ENCODE measurements at regions of chr15 and their contacts with region 1.

Region 1: DNA sequence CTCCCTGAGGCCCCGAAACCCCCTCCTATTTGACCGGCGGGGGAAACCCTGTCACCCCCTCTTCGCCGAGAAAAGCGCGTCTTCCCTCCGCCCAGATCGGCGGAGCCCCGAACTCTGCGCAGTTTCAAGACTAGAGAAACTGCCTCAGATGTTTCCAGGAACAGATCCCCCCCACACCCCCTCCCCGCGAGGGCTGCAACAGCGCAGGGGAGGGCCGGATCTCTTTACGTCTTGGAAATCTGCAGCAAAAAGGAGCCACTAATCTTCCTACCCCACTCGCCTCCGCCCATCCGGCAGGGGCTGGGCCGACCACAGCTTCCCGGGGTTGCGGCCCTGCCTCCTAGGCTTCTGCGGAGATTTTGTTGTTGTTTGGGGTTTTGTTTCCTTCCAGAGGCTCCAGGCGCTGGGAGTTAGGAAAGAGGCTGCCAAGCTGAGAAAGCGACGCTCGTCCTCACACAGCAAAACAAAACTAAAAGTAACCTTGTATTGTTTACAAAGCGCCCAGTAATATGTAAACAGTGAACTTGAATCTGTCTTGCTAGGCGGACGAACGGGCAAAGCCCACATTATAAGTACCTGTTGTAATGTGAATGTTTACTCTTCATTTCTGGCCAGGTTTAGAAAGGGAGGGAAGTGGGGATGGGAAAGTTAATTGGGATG is 2.2 kb downstream of the FOXB1 start:
- DNase-seq: peak in 8 of 9 experiments; percentile 43 to 71 (median 58)
- ATAC-seq: peak; percentile 69
- H3K4me3 ChIP-seq: peak overlapping the region; percentile 48 to 53
- H3K4me3 Mint-ChIP-seq: peak overlapping the region; percentile 83
- H3K27ac ChIP-seq: no peak overlapping the region
- H3K27ac Mint-ChIP-seq: peak overlapping the region; percentile 71
- H3K4me1 ChIP-seq: peaks cover 36% of the 10 kb centered on the region
- H3K4me1 Mint-ChIP-seq: peaks cover 33% of the 10 kb centered on the region
- H3K27me3 ChIP-seq: peaks cover 62 to 73% of the 10 kb centered on the region in 2 experiments
- H3K27me3 Mint-ChIP-seq: peaks cover 92% of the 10 kb centered on the region
- CTCF ChIP-seq: no peak

Region 2: DNA sequence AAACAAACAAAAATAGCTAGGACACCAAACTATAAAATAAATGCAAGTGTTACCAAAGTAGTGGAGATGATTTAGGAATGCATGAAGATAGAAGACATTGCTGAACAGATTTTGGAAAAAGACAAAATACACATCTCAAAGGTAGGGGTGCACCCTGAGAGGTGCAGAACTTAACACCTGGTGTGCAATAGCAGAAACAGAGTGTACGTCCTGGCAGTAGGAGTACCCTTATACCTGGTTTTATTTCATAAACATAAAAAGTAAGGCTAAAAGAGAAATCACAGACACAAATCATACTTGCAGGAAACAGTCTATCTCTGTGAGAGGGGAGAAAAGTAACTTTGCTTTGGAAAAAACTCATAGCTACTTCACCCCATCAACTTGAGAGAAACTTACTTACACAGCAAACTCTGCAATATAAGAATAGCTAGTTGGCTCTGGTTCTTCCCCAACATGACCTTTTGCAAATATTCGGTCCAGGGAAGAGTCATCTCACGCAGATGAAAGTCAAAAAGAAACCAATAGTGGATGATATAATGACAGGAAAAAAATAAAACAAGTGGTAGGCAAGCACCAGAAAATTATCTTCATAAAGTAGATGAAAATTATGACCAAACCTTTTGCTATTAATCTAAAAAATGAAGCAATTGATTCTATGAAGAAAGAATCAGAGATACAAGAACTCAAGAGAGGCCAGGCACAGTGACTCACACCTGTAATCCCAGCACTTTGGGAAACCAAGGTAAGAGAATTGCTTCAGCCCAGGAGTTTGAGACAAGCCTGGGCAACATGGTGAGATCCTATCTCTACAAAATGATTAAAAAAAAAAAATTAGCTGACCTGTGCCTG is 208.4 kb before region 1 on chr15:
- CTCF ChIA-PET with region 1: no interaction called
- POLR2A ChIA-PET with region 1: no interaction called
- intact Hi-C with region 1: loop called in 1 of 2 experiments (anchors 5 kb)
- DNase-seq: no peak
- ATAC-seq: no peak
- H3K4me3 ChIP-seq: peak overlapping the region in 1 of 2 experiments; percentile 11
- H3K4me3 Mint-ChIP-seq: peak overlapping the region; percentile 49
- H3K27ac ChIP-seq: peak overlapping the region; percentile 21 to 37
- H3K27ac Mint-ChIP-seq: peak overlapping the region; percentile 85
- H3K4me1 ChIP-seq: peaks cover 66% of the 10 kb centered on the region
- H3K4me1 Mint-ChIP-seq: peaks cover 76% of the 10 kb centered on the region
- H3K27me3 ChIP-seq: no peaks in the 10 kb centered on the region
- H3K27me3 Mint-ChIP-seq: no peaks in the 10 kb centered on the region
- CTCF ChIP-seq: no peak

Region 3: DNA sequence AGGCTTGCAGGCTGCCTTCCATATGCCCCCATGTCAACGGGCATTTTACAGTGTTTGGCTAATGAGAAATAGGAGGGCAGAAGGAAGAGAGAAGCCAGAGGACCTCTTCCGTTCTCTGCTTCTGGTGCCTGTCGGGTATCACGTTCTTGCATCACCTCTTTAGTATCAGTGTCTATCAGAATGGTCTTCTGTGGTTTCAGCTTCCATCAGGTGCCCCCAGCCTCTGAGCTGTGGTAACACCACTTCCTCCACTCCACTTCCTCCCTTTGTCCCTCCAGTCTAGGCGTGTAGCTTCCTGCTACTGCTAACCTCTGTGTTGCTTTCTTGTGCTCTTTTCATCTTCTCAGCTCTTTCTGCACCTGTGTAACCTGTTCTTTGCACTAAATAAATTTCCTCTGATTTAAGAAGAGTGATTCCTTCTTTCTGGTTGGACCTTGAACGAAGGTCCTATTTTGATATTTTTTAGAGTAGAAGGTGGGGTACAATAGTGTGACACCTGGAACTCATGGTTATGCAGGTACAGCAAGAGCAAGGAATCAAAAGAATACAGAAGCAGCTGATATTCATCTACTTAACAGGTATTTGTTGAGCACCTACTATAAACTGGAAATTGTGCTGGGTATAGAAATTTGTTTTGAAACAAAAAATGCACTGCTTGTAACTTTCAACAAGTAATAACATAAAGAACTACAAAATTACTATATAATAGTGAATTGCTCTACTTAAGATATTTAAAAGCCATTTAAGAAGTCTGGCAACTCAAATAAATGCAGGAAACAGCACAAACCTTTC is 29.7 kb before region 1 on chr15:
- CTCF ChIA-PET with region 1: no interaction called
- POLR2A ChIA-PET with region 1: interaction called, 3 read pairs
- intact Hi-C with region 1: loop called in 1 of 2 experiments (anchors 2 kb)
- DNase-seq: peak in 8 of 9 experiments; percentile 41 to 86 (median 64)
- ATAC-seq: peak; percentile 93
- H3K4me3 ChIP-seq: no peak overlapping the region
- H3K4me3 Mint-ChIP-seq: peak overlapping the region; percentile 40
- H3K27ac ChIP-seq: no peak overlapping the region
- H3K27ac Mint-ChIP-seq: peak overlapping the region; percentile 67
- H3K4me1 ChIP-seq: peaks cover 25% of the 10 kb centered on the region
- H3K4me1 Mint-ChIP-seq: peaks cover 30% of the 10 kb centered on the region
- H3K27me3 ChIP-seq: no peaks in the 10 kb centered on the region
- H3K27me3 Mint-ChIP-seq: peaks cover 2% of the 10 kb centered on the region
- CTCF ChIP-seq: no peak

Region 4: DNA sequence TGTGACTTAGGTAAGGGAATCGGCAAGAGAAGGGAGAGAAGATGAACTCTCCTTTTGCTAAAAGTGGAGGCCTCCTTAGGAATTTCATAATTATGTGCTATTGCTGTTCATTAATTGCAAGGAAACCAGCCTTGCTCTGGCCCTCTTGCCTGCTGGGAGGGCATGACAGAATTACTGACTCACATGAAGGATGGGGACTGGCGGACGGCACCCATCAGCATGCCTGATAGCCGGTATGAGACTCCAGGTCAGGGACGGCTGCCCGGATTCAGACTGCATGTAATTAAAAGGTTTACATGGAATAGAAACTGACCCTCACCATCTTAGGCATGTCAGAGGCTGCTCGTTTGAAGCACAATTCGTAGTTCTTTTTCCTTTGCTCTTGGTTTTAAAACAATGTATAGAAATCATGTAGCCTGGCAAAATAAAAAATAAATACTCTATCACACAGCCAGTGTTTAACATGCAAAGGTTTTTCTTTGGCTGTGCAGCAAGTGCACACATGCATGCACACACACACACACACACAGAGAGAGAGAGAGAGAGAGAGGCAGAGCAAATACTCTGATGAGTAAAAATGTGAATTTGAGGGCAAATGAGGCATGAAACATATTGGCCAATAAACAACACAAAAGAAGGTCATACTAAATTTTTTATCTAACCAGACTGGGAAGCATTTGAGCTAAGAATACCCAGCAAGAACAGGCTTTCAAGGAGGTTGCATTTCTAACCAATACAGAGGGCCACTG is 80.5 kb after region 1 on chr15:
- CTCF ChIA-PET with region 1: no interaction called
- POLR2A ChIA-PET with region 1: no interaction called
- intact Hi-C with region 1: no loop called
- DNase-seq: no peak
- ATAC-seq: no peak
- H3K4me3 ChIP-seq: no peak overlapping the region
- H3K4me3 Mint-ChIP-seq: no peak overlapping the region
- H3K27ac ChIP-seq: no peak overlapping the region
- H3K27ac Mint-ChIP-seq: no peak overlapping the region
- H3K4me1 ChIP-seq: no peaks in the 10 kb centered on the region
- H3K4me1 Mint-ChIP-seq: no peaks in the 10 kb centered on the region
- H3K27me3 ChIP-seq: no peaks in the 10 kb centered on the region
- H3K27me3 Mint-ChIP-seq: peaks cover 8% of the 10 kb centered on the region
- CTCF ChIP-seq: no peak

Region 5: DNA sequence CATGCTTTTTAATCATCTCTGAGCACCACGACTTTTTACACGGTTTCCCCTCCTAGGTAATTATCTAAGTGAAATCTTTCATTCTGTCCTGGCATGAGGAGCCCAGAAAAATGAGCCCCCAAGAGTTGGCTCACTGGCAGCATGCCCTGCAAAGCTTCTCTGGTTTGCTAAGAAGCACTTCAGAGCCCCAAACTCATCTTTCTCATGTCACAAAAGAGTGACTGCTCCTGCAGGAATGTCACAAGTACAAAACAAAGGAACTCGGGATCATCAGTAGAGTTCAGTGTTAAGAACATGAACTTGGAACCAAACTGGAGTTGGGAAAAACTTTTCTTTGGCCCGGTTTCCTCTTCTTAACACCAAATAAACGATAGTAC is 121.7 kb after region 1 on chr15:
- CTCF ChIA-PET with region 1: interaction called, 3 read pairs
- POLR2A ChIA-PET with region 1: no interaction called
- intact Hi-C with region 1: loop called (anchors 2 to 10 kb)
- DNase-seq: peak in 1 of 9 experiments; percentile 50
- ATAC-seq: no peak
- H3K4me3 ChIP-seq: peak overlapping the region; percentile 54 to 71
- H3K4me3 Mint-ChIP-seq: peak overlapping the region; percentile 83
- H3K27ac ChIP-seq: peak overlapping the region; percentile 70 to 86
- H3K27ac Mint-ChIP-seq: peak overlapping the region; percentile 91
- H3K4me1 ChIP-seq: peaks cover 5% of the 10 kb centered on the region
- H3K4me1 Mint-ChIP-seq: peaks cover 32% of the 10 kb centered on the region
- H3K27me3 ChIP-seq: no peaks in the 10 kb centered on the region
- H3K27me3 Mint-ChIP-seq: peaks cover 2% of the 10 kb centered on the region
- CTCF ChIP-seq: no peak

Region 6: DNA sequence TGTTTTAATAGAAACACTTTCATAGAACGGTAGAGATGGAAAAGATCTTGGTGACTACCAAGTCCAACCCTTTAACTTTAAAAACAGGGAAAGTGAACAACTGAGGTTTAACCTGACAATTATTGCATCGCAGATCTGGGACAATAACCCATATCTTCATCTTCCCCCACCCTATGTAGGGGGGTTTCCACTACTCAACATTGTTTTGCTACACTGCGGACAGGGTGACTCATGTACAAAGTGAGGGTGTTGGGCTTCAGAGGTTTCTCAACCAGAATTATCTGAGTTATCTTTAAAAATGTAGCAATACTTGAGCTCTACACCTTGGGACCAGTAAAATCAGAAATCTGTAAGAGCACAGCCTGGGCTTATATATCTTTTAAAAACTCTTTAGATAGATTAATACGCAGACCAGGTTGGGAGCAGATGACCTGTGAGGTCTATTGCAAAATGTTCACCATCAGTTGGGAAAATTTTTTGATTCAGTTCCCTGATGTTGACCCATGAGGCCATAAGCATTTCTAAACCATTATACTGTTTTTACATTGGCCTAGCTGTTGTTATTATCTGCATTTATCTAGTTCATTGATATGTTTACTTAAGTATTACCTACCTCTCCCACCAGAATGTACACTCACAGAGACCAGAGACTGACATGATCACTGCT is 576.2 kb after region 1 on chr15:
- CTCF ChIA-PET with region 1: no interaction called
- POLR2A ChIA-PET with region 1: no interaction called
- intact Hi-C with region 1: no loop called
- DNase-seq: peak in 6 of 9 experiments; percentile 36 to 91 (median 60)
- ATAC-seq: peak; percentile 53
- H3K4me3 ChIP-seq: peak overlapping the region; percentile 11 to 24
- H3K4me3 Mint-ChIP-seq: peak overlapping the region; percentile 63
- H3K27ac ChIP-seq: peak overlapping the region; percentile 22 to 85
- H3K27ac Mint-ChIP-seq: peak overlapping the region; percentile 95
- H3K4me1 ChIP-seq: peaks cover 91% of the 10 kb centered on the region
- H3K4me1 Mint-ChIP-seq: peaks cover 95% of the 10 kb centered on the region
- H3K27me3 ChIP-seq: no peaks in the 10 kb centered on the region
- H3K27me3 Mint-ChIP-seq: no peaks in the 10 kb centered on the region
- CTCF ChIP-seq: no peak